H1 (cell line): ENCODE measurements at regions of chr1 and their contacts with region 1.

Region 1: GRCh38 chr1:206635080-206635977 is at the start of gene DYRK3:
- DNase-seq: peak; percentile 63 to 97
- H3K4me3 ChIP-seq: peak within 1 kb of the TSS; percentile 66 to 88 (median 79)
- H3K27ac ChIP-seq: no peak within 1 kb of the TSS
- H3K4me1 ChIP-seq: peaks cover 0 to 10% (median 4%) of the 10 kb centered on the region in 4 experiments; a peak in 4 of 7 replicates
- H3K27me3 ChIP-seq: peaks cover 0 to 4% (median 0%) of the 10 kb centered on the region in 4 experiments; a peak in 2 of 7 replicates
- CTCF ChIP-seq: no peak
- EP300 ChIP-seq: no peak
- POLR2A ChIP-seq: peak in 1 of 2 experiments; percentile 68; a peak in 1 of 3 replicates
- RAD21 ChIP-seq: no peak
- total RNA-seq, gene DYRK3: 7.7 and 8.5 TPM in 2 replicates

Region 2: DNA sequence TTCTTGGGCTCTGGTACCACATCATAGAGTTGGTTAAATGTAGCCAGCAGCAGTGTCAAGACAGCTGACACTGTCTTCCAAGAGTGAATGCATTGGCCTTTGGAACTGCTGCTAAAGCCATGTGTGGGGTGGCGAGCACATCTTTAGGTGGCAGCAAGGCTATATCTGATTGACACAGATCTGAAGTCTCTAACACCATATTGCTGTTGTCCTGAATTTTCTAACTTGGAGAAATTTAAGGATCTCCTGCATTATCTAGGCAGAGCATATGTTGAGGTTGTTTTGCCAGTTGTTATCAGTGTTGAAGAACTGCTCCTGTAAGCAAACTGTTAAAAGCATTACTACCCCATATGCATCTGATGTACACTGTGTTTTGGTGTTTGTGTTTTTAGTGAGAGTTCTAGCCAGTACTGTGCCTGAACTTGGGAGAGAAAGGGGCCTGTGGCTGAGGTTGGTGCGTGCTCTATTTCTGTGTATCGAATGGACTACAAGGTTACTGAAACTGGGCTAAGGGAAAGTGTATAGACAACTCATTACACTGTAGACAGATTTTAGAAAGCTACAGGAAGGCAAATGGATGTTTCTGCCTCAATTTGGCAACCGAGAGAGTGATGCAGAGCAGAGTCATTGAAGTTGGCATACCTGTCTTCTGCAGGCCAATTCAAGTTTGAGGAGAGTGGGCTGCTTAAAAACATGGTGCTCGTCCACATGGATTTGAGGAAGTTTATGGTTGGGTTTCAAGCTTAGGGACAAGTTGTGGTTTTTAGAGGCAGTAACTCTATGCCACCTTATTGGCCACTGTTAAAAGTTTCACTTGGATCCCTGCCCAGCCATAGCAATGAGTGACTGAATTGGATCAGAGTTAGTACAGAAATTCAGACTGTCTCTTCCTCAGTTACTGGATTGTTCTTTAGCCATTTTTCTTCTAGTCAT is 16.9 kb after region 1 on chr1:
- CTCF ChIA-PET with region 1: interaction called, 666 read pairs
- POLR2A ChIA-PET with region 1: interaction called, 4 read pairs
- DNase-seq: no peak
- H3K4me3 ChIP-seq: no peak overlapping the region
- H3K27ac ChIP-seq: no peak overlapping the region
- H3K4me1 ChIP-seq: no peaks in the 10 kb centered on the region
- H3K27me3 ChIP-seq: peaks cover 0 to 5% (median 4%) of the 10 kb centered on the region in 4 experiments; a peak in 4 of 7 replicates
- CTCF ChIP-seq: no peak
- EP300 ChIP-seq: no peak
- POLR2A ChIP-seq: no peak
- RAD21 ChIP-seq: no peak

Region 3: GRCh38 chr1:206797534-206798383 is 162.4 kb after region 1 on chr1:
- CTCF ChIA-PET with region 1: no interaction called
- POLR2A ChIA-PET with region 1: no interaction called
- DNase-seq: peak; percentile 25 to 69
- H3K4me3 ChIP-seq: no peak overlapping the region
- H3K27ac ChIP-seq: no peak overlapping the region
- H3K4me1 ChIP-seq: no peaks in the 10 kb centered on the region
- H3K27me3 ChIP-seq: no peaks in the 10 kb centered on the region
- CTCF ChIP-seq: peak; percentile 71 to 98 (median 91)
- EP300 ChIP-seq: no peak
- POLR2A ChIP-seq: no peak
- RAD21 ChIP-seq: peak; percentile 49 to 64